ENCODE measurements at regions of chr21 and their contacts with region 1.

Region 1: GRCh38 chr21:34544032-34544496 is 32.1 kb upstream of the KCNE1 start:
- DNase-seq: peak; percentile 85
- H3K4me3 ChIP-seq: no peak overlapping the region
- H3K27ac ChIP-seq: peak overlapping the region; percentile 66 to 80 (median 76)
- H3K4me1 ChIP-seq: peaks cover 9 to 35% (median 29%) of the 10 kb centered on the region in 4 donors
- H3K27me3 ChIP-seq: no peaks in the 10 kb centered on the region
- CTCF ChIP-seq: peak; percentile 53 to 90 (median 63)
- EP300 ChIP-seq: no peak
- POLR2A ChIP-seq: no peak

Region 2: DNA sequence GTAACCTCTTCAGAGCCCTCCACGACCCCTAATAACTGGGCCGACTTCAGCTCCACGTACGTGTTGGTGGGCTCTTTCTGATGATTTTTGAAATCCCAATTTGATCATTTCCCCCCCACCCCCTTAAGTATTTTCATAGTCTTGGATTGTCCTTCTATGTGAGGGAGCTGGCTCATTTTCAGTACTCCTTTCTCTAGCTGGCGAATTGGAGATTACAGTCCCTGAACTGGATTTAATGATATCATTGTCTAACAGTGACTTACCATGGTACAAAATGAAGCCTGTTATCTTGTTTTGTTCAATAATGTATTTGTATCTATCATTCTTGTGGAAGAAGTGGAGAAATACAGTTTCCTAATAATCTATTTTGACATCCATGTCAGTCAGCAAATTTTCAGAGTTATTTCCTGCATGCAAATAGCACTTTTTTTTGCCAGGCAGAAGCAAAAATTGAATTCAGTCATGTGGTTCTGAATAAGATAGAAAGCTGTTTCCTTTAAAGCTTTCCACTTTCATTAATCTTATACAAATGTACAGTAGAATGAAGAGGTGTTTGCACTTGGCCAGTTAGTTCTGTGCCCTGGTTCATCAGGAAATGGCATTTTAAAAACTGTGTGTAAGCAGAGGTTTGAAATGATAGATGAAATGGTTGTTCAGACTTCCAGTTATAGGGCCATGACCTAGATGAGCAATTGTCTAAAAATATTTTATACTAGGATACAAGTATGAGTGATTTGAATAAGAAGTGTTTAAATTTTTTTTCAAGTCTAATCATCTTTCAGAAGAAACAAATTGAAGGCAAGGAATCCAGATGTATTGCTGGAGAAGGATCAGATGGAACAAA is 732.7 kb before region 1 on chr21:
- in situ Hi-C with region 1: no loop called
- intact Hi-C with region 1: no loop called
- DNase-seq: no peak
- H3K4me3 ChIP-seq: no peak overlapping the region
- H3K27ac ChIP-seq: peak overlapping the region; percentile 39 to 53 (median 48)
- H3K4me1 ChIP-seq: peaks cover 0 to 19% (median 3%) of the 10 kb centered on the region in 4 donors
- H3K27me3 ChIP-seq: no peaks in the 10 kb centered on the region
- CTCF ChIP-seq: no peak
- EP300 ChIP-seq: no peak
- POLR2A ChIP-seq: no peak

Region 3: DNA sequence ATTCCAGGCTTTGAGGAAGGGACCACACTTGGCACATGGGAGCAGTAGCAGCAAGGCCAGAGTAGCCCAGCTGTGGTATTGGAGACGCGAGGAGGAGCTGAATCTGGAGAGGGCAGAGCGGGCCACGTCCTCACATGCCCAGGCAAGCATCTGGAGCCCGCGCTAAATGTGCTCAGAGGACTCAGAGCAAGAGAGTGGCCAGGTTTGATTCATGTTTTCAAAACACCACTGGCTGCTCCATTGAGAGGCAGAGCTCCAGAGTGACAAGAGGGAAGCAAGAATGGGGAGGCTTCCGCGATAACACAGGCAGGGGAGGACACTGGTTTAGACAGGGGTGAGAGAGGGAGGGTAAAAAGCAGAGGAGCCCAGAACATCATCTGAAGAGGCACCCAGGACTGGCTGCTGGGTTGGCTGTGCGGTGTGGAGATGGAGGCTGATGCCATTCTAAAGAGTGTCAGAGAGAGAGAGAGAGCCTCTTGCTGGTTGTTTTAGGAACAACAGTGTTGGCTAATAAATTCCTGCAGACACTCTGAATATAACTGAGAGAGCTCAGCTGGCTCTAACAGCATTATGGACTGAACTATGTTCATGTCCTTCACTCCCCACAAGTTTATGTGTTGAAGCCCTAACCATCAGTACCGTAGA is 38.6 kb after region 1 on chr21:
- in situ Hi-C with region 1: no loop called
- intact Hi-C with region 1: loop called (anchors 5 kb)
- DNase-seq: no peak
- H3K4me3 ChIP-seq: no peak overlapping the region
- H3K27ac ChIP-seq: peak overlapping the region in 2 of 4 donors; percentile 27 to 36
- H3K4me1 ChIP-seq: peaks cover 0 to 34% (median 10%) of the 10 kb centered on the region in 4 donors
- H3K27me3 ChIP-seq: no peaks in the 10 kb centered on the region
- CTCF ChIP-seq: peak; percentile 30 to 66 (median 37)
- EP300 ChIP-seq: no peak
- POLR2A ChIP-seq: no peak

Region 4: DNA sequence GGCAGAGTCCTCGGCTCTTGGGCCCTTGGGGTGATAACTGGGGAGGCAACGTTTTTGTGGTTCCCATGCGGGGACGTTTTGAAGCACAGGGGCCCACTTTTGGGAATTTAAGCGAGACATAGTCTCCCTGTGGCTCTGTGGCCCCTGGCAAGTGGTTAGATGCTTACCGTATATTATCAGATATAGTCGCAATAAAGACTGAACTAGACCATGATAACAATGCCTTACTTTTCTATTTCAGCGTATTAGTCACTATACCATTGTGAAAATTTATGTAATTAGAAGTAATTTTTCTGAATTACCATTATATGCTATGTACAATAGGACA is 71.4 kb after region 1 on chr21:
- in situ Hi-C with region 1: no loop called
- intact Hi-C with region 1: no loop called
- DNase-seq: no peak
- H3K4me3 ChIP-seq: peak overlapping the region in 3 of 4 donors; percentile 61 to 93 (median 79)
- H3K27ac ChIP-seq: peak overlapping the region; percentile 83 to 91 (median 86)
- H3K4me1 ChIP-seq: peaks cover 0 to 22% (median 15%) of the 10 kb centered on the region in 4 donors
- H3K27me3 ChIP-seq: no peaks in the 10 kb centered on the region
- CTCF ChIP-seq: peak in 1 of 5 experiments; percentile 13
- EP300 ChIP-seq: no peak
- POLR2A ChIP-seq: peak; percentile 33